ENCODE measurements at regions of chr17 and their contacts with region 1.

Region 1: GRCh38 chr17:21043286-21044232 is 748 bp upstream of the USP22 start:
- DNase-seq: peak; percentile 84
- ATAC-seq: peak; percentile 90
- H3K4me3 ChIP-seq: peak overlapping the region; percentile 61; the same call in 1 of the 2 replicates
- H3K27ac ChIP-seq: peak overlapping the region; percentile 93
- H3K4me1 ChIP-seq: peaks cover 12% of the 10 kb centered on the region
- H3K27me3 ChIP-seq: no peaks in the 10 kb centered on the region
- CTCF ChIP-seq: peak; percentile 77 to 84 (median 79)
- EP300 ChIP-seq: peak; percentile 10 to 53; a peak in 2 of 4 replicates
- POLR2A ChIP-seq: peak; percentile 82
- RAD21 ChIP-seq: peak; percentile 34; the same call in 1 of the 2 replicates

Region 2: DNA sequence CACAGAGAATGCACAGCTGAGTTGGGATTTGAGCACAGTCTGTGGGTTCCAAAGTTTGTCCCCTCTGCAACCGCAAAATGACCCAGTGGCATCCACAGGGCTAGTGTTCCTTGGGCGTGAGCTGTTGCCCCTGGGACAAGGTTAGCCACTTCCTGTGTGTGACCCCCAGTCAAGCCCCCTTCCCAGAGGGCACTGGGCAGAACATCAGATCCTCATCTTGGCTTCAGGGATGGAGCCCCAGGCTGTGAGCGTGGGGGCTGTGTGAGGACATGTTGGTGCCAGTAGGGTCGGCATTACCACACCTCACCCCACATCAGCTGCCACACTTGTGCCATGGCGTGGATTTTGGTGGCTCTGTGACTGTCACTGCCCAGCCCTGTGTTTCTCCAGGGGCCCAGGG is 56.0 kb before region 1 on chr17:
- CTCF ChIA-PET with region 1: no interaction called
- POLR2A ChIA-PET with region 1: no interaction called
- RAD21 ChIA-PET with region 1: no interaction called
- SMC1A ChIA-PET with region 1: no interaction called
- in situ Hi-C with region 1: no loop called
- intact Hi-C with region 1: no loop called
- DNase-seq: no peak
- ATAC-seq: no peak
- H3K4me3 ChIP-seq: no peak overlapping the region
- H3K27ac ChIP-seq: no peak overlapping the region
- H3K4me1 ChIP-seq: no peaks in the 10 kb centered on the region
- H3K27me3 ChIP-seq: no peaks in the 10 kb centered on the region; a peak in 1 of 4 replicates
- CTCF ChIP-seq: no peak
- EP300 ChIP-seq: no peak
- POLR2A ChIP-seq: no peak
- RAD21 ChIP-seq: no peak

Region 3: GRCh38 chr17:21058098-21058893 is 14.7 kb after region 1 on chr17:
- CTCF ChIA-PET with region 1: interaction called, 19 read pairs
- POLR2A ChIA-PET with region 1: interaction called, 41 read pairs
- RAD21 ChIA-PET with region 1: interaction called, 18 read pairs
- SMC1A ChIA-PET with region 1: interaction called, 20 read pairs
- in situ Hi-C with region 1: no loop called
- intact Hi-C with region 1: loop called (anchors 1 kb)
- DNase-seq: no peak
- ATAC-seq: no peak
- H3K4me3 ChIP-seq: no peak overlapping the region
- H3K27ac ChIP-seq: no peak overlapping the region
- H3K4me1 ChIP-seq: peaks cover 33% of the 10 kb centered on the region
- H3K27me3 ChIP-seq: no peaks in the 10 kb centered on the region
- CTCF ChIP-seq: no peak
- EP300 ChIP-seq: no peak
- POLR2A ChIP-seq: no peak
- RAD21 ChIP-seq: no peak

Region 4: DNA sequence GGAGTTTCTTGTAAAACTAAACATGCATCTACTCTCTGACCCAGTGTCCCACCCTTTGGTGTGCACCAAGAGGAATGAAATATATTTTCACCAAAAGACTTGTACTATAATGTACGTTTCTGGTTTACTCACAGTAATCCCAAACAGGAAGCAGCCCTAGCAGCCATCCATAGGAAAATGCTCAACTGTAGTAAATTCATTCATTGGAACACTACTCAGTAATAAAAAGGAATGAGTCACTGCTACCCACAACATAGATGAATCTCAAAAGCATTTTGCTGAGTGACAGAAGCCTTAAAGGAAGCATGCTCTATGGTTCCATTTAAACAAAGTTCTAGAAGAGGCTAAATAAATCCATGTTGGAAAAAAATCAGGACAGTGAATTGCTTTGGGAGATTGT is 45.6 kb after region 1 on chr17:
- CTCF ChIA-PET with region 1: interaction called, 10 read pairs
- POLR2A ChIA-PET with region 1: interaction called, 4 read pairs
- RAD21 ChIA-PET with region 1: interaction called, 4 read pairs
- SMC1A ChIA-PET with region 1: interaction called, 6 read pairs
- in situ Hi-C with region 1: no loop called
- intact Hi-C with region 1: no loop called
- DNase-seq: no peak
- ATAC-seq: peak; percentile 57
- H3K4me3 ChIP-seq: no peak overlapping the region
- H3K27ac ChIP-seq: no peak overlapping the region
- H3K4me1 ChIP-seq: peaks cover 9% of the 10 kb centered on the region; the same call in 1 of the 2 replicates
- H3K27me3 ChIP-seq: no peaks in the 10 kb centered on the region
- CTCF ChIP-seq: no peak
- EP300 ChIP-seq: no peak
- POLR2A ChIP-seq: no peak
- RAD21 ChIP-seq: no peak

Region 5: DNA sequence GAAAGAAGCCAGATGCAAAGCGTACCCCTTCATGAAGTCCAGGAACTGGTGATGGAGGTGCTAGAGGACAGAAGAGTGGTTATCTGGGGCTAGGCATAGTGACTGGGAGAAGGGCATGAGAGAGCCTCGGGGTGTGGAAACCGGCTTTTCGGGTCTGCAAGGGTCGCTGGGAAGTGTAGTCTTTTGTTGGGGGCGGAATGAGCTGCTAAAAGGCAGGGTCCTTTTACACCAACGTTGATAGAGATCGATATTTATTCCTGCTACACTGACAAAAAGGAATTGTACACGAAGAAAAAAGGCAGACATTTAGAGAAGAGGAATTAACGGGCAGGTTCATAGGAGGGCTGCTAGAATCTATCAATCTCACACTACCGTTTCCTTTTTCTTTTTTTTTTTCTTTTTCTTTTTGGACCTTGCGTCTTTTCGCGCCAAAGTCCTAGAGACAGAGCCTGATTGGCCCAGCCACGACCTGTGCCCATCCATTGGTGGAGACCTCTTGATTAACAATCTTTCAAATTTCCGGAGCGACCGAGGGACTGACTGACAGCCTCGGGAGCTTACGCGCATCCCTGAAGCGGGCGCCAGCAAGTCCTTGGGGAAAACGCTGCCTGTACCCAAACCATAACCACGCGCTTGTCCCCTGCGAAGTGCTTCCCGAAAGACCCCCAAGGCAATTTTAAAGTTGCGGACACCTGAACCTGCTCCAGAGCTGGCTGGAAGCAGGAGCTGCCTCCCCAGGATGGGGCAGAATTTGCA is 55.6 kb after region 1 on chr17:
- CTCF ChIA-PET with region 1: interaction called, 32 read pairs
- POLR2A ChIA-PET with region 1: interaction called, 20 read pairs
- RAD21 ChIA-PET with region 1: interaction called, 22 read pairs
- SMC1A ChIA-PET with region 1: interaction called, 25 read pairs
- in situ Hi-C with region 1: no loop called
- intact Hi-C with region 1: loop called (anchors 1 kb)
- DNase-seq: peak; percentile 65
- ATAC-seq: peak; percentile 99
- H3K4me3 ChIP-seq: peak overlapping the region; percentile 95
- H3K27ac ChIP-seq: peak overlapping the region; percentile 97
- H3K4me1 ChIP-seq: no peaks in the 10 kb centered on the region; the same call in 1 of the 2 replicates
- H3K27me3 ChIP-seq: no peaks in the 10 kb centered on the region
- CTCF ChIP-seq: no peak
- EP300 ChIP-seq: no peak
- POLR2A ChIP-seq: peak; percentile 48; the same call in 1 of the 2 replicates
- RAD21 ChIP-seq: no peak

Region 6: GRCh38 chr17:21214015-21214776 is 170.6 kb after region 1 on chr17 and contains the start of gene TMEM11:
- CTCF ChIA-PET with region 1: interaction called, 3 read pairs
- POLR2A ChIA-PET with region 1: no interaction called
- RAD21 ChIA-PET with region 1: no interaction called
- SMC1A ChIA-PET with region 1: interaction called, 4 read pairs
- in situ Hi-C with region 1: loop called (anchors 5 kb)
- intact Hi-C with region 1: loop called (anchors 5 kb)
- DNase-seq: peak; percentile 71
- ATAC-seq: peak; percentile 95
- H3K4me3 ChIP-seq: peak within 1 kb of the TSS; percentile 81
- H3K27ac ChIP-seq: peak within 1 kb of the TSS; percentile 90
- H3K4me1 ChIP-seq: peaks cover 9% of the 10 kb centered on the region; the same call in 1 of the 2 replicates
- H3K27me3 ChIP-seq: no peaks in the 10 kb centered on the region
- CTCF ChIP-seq: no peak
- EP300 ChIP-seq: no peak
- POLR2A ChIP-seq: peak; percentile 88
- RAD21 ChIP-seq: no peak
- polyA plus RNA-seq, gene TMEM11: 16.3 to 18.4 TPM

Region 7: DNA sequence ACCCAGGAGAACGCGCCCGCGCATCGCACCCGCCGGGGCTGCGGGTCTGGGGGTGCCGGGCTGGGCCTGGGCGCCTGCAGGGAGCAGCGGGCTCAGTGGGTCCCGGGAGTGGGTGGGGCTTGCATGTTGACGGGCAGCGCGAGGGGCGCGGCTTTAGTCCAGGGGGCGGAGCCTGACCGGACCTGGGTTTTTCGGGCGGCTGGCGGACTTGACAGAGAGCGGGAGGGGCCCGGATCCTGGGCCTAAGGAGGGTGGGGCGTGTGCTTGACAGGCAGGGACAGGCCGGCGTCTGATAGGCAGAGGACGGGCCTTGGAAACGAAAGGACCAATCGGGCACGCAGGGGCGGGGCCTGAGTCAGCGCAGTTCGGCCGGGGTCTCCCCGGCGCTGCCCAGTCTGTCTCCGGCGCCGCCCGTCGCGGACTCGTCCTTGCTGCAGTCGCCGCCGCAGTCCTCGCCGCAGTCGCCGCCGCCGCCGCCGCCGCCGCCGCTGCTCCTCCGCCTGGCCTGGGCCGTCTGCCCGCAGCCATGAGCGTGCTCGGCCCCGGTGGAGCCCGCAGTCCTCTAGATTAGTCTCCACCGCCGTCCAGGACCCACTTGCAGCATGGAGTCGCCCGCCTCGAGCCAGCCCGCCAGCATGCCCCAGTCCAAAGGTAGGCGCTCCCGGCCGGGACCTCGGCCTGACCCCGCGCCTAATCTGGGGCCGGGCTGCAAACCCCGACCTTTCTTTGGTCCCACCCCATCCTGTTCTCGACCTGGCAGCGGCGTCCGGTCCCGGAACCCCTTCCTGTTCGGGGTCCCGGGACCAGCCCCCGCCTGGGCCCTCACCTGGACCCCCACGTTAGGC is 241.0 kb after region 1 on chr17 and contains the start of gene MAP2K3:
- CTCF ChIA-PET with region 1: interaction called, 3 read pairs
- POLR2A ChIA-PET with region 1: interaction called, 11 read pairs
- RAD21 ChIA-PET with region 1: interaction called, 4 read pairs
- SMC1A ChIA-PET with region 1: interaction called, 3 read pairs
- in situ Hi-C with region 1: no loop called
- intact Hi-C with region 1: loop called (anchors 5 kb)
- DNase-seq: peak; percentile 88
- ATAC-seq: peak; percentile 80
- H3K4me3 ChIP-seq: peak within 1 kb of the TSS; percentile 94
- H3K27ac ChIP-seq: peak within 1 kb of the TSS; percentile 68
- H3K4me1 ChIP-seq: peaks cover 31% of the 10 kb centered on the region
- H3K27me3 ChIP-seq: 0 out of 4 replicates have a peak, but pooled peaks cover 0 to 3% of the 10 kb centered on the region in 2 experiments
- CTCF ChIP-seq: no peak
- EP300 ChIP-seq: no peak
- POLR2A ChIP-seq: peak; percentile 86
- RAD21 ChIP-seq: no peak
- polyA plus RNA-seq, gene MAP2K3: 0.71 to 3.8 TPM